ENCODE measurements at regions of chr2 and their contacts with region 1.

Region 1: GRCh38 chr2:75627895-75628504 is 18.6 kb upstream of the MRPL19 start:
- DNase-seq: peak; percentile 78
- H3K4me3 ChIP-seq: no peak overlapping the region
- H3K27ac ChIP-seq: no peak overlapping the region
- H3K4me1 ChIP-seq: no peaks in the 10 kb centered on the region
- H3K27me3 ChIP-seq: peaks cover 10 to 19% of the 10 kb centered on the region in 2 experiments
- CTCF ChIP-seq: peak; percentile 92 to 94
- POLR2A ChIP-seq: no peak

Region 2: GRCh38 chr2:75064691-75065396 is 563.2 kb before region 1 on chr2:
- CTCF ChIA-PET with region 1: interaction called, 13 read pairs
- POLR2A ChIA-PET with region 1: no interaction called
- dilution Hi-C with region 1: no loop called
- intact Hi-C with region 1: loop called (anchors 1 kb)
- DNase-seq: peak; percentile 66
- H3K4me3 ChIP-seq: no peak overlapping the region
- H3K27ac ChIP-seq: no peak overlapping the region
- H3K4me1 ChIP-seq: no peaks in the 10 kb centered on the region
- H3K27me3 ChIP-seq: no peaks in the 10 kb centered on the region
- CTCF ChIP-seq: peak; percentile 88 to 91
- POLR2A ChIP-seq: no peak

Region 3: GRCh38 chr2:75539955-75540716 is 87.9 kb before region 1 on chr2:
- CTCF ChIA-PET with region 1: no interaction called
- POLR2A ChIA-PET with region 1: no interaction called
- dilution Hi-C with region 1: no loop called
- intact Hi-C with region 1: no loop called
- DNase-seq: no peak
- H3K4me3 ChIP-seq: no peak overlapping the region
- H3K27ac ChIP-seq: no peak overlapping the region
- H3K4me1 ChIP-seq: no peaks in the 10 kb centered on the region
- H3K27me3 ChIP-seq: no peaks in the 10 kb centered on the region
- CTCF ChIP-seq: no peak
- POLR2A ChIP-seq: no peak

Region 4: DNA sequence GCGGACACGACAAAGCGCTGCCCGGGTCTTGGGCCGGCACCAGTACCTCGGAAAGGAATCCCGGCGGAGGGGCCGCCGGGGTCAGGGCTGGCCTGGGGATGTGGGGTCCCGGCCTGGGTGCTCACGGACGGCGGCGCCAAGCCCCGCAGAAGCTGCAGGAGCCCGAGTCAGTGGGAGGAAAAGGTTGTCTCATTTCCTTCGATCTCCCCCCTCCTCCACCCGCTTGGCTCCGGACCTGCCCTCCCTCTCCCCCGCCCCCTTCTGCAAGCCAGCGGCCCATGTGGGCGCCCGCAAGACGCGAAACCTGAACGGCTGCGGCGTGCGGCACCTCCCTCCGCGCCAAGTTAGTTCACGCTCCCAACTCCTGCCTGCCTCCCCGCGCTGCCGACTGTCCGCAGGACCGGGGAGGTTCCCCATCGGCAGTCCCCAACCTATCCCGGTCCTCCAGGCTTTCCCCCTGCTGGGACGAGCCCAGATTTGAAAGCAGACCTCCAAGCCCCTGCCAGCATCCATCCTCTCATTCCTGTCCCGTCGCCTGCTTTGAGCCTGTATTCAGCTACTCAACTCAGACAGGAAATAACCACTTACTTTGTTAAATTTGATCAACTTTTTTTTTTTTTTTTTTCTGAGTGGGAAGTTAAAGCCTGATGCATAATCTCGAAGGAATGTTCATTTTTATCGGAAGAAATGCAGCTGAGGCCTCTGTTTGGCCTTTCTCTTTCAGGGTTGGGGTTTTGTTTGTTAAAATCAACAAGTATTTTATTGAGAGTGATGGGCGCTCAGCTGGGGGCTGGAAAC is 67.0 kb before region 1 on chr2 and contains the start of gene EVA1A:
- CTCF ChIA-PET with region 1: interaction called, 27 read pairs
- POLR2A ChIA-PET with region 1: no interaction called
- dilution Hi-C with region 1: no loop called
- intact Hi-C with region 1: no loop called
- DNase-seq: peak; percentile 85
- H3K4me3 ChIP-seq: peak within 1 kb of the TSS; percentile 63 to 94 (median 91)
- H3K27ac ChIP-seq: peak within 1 kb of the TSS; percentile 72
- H3K4me1 ChIP-seq: peaks cover 35% of the 10 kb centered on the region
- H3K27me3 ChIP-seq: no peaks in the 10 kb centered on the region
- CTCF ChIP-seq: no peak
- POLR2A ChIP-seq: peak; percentile 78
- total RNA-seq, gene EVA1A: 59.7 and 66.5 TPM in 2 replicates

Region 5: DNA sequence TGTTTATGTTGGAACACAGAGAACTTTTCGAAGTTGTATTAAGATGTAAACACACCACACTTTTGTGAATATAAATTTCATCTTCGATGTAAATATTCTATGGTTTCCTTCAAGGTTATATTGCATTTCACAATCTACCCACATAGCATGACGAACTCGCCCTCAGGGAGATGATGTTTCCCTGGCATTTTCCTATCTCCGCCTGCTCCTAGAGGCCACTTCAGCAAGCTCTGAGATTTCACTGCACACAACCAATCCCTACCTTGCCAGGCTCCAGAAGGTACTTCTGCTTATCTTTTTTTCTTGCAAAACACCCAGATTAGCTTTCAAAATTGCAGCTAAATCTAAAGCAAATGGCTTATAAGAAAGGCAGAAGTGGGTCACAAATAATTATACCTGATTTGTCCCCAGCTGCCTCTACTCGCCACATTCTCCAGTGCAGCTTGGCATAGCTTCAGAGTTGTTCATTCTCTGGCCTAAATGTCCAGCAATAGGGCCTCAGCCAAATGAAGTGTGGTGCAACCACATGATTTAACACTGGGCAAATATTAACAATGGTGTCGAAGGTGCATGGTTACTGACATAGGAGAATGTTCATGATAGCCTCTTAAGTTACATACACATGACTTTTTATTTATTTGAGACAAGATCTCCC is 13.8 kb before region 1 on chr2:
- CTCF ChIA-PET with region 1: interaction called, 53 read pairs
- POLR2A ChIA-PET with region 1: no interaction called
- dilution Hi-C with region 1: no loop called
- intact Hi-C with region 1: loop called (anchors 1 kb)
- DNase-seq: no peak
- H3K4me3 ChIP-seq: no peak overlapping the region
- H3K27ac ChIP-seq: no peak overlapping the region
- H3K4me1 ChIP-seq: no peaks in the 10 kb centered on the region
- H3K27me3 ChIP-seq: peaks cover 7 to 14% of the 10 kb centered on the region in 2 experiments
- CTCF ChIP-seq: no peak
- POLR2A ChIP-seq: no peak

Measured in endothelial cell of umbilical vein (primary cell).